ENCODE measurements at regions of chr7 and their contacts with region 1.

Region 1: DNA sequence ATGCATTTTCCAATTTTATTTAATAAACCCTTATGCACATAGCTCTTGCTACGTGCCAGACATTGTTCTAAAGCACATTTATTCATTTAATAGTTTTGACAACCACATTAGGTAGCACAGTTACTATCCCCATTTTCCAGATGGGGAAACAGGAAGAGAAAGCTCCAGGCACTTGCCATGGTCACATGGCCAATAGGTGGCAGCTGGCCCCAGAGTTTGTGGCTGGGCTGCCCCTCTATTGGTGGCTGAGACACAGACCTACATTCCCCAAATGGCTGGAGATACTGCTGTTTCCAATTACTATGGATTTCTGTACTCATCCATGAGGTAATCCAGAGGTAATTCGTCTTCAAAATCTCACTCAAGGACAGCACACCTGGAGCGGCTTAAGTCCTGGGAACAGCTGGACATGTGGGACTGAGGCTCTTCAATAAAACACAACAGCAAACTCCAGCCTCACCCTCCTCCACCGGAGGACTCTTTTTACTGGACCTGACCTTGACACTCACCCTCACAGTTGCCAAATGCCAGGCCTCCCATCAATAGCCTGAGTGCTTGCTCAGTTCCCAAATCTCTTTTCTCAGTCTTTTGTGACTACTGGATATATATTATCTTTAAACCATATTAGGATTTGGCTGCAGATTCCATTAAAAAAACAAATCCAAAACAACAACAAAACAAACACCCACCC is 106.1 kb downstream of the CLEC2L start:
- DNase-seq: no peak
- H3K4me3 Mint-ChIP-seq: no peak overlapping the region
- H3K27ac Mint-ChIP-seq: peak overlapping the region; percentile 82
- H3K4me1 Mint-ChIP-seq: peaks cover 77% of the 10 kb centered on the region
- H3K27me3 Mint-ChIP-seq: no peaks in the 10 kb centered on the region

Region 2: GRCh38 chr7:139610595-139610994 is 18.9 kb before region 1 on chr7:
- CTCF ChIA-PET with region 1: no interaction called
- POLR2A ChIA-PET with region 1: no interaction called
- DNase-seq: no peak
- H3K4me3 Mint-ChIP-seq: no peak overlapping the region
- H3K27ac Mint-ChIP-seq: no peak overlapping the region
- H3K4me1 Mint-ChIP-seq: no peaks in the 10 kb centered on the region
- H3K27me3 Mint-ChIP-seq: no peaks in the 10 kb centered on the region

Region 3: DNA sequence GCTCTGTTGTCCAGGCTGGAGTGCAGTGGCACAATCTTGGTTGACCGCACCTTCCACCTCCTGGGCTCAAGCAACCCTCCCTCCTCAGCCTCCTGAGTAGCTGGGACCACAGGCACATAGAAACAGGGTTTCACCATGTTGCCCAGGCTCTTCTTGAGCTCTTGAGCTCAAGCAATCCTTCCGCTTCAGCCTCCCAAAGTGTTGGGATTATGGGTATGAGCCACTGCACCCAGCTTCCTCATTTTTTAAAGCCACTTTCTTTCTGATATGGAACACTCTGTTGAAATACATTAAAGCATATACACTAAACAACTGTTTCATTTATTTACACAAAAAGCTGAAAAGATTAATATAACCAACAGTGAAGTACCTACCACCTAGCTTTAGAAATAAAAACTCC is 11.1 kb after region 1 on chr7:
- CTCF ChIA-PET with region 1: interaction called, 12 read pairs
- POLR2A ChIA-PET with region 1: no interaction called
- DNase-seq: no peak
- H3K4me3 Mint-ChIP-seq: no peak overlapping the region
- H3K27ac Mint-ChIP-seq: no peak overlapping the region
- H3K4me1 Mint-ChIP-seq: peaks cover 61% of the 10 kb centered on the region
- H3K27me3 Mint-ChIP-seq: no peaks in the 10 kb centered on the region